IMR-90 (cell line): ENCODE measurements at regions of chr15 and their contacts with region 1.

Region 1: GRCh38 chr15:85296615-85297402 is 83.6 kb upstream of the AKAP13 start:
- DNase-seq: peak; percentile 81
- ATAC-seq: peak; percentile 100
- H3K4me3 ChIP-seq: peak overlapping the region; percentile 15; the same call in 1 of the 2 replicates
- H3K27ac ChIP-seq: no peak overlapping the region
- H3K4me1 ChIP-seq: no peaks in the 10 kb centered on the region
- H3K27me3 ChIP-seq: no peaks in the 10 kb centered on the region
- CTCF ChIP-seq: peak; percentile 82
- POLR2A ChIP-seq: no peak
- RAD21 ChIP-seq: peak; percentile 93

Region 2: GRCh38 chr15:84955089-84955848 is 341.5 kb before region 1 on chr15:
- CTCF ChIA-PET with region 1: no interaction called
- POLR2A ChIA-PET with region 1: no interaction called
- dilution Hi-C with region 1: no loop called
- in situ Hi-C with region 1: loop called (anchors 25 kb)
- intact Hi-C with region 1: no loop called
- DNase-seq: peak; percentile 78
- ATAC-seq: peak; percentile 98
- H3K4me3 ChIP-seq: no peak overlapping the region
- H3K27ac ChIP-seq: no peak overlapping the region
- H3K4me1 ChIP-seq: peaks cover 6% of the 10 kb centered on the region
- H3K27me3 ChIP-seq: no peaks in the 10 kb centered on the region
- CTCF ChIP-seq: peak; percentile 87
- POLR2A ChIP-seq: peak; percentile 50; the same call in 1 of the 2 replicates
- RAD21 ChIP-seq: peak; percentile 90

Region 3: DNA sequence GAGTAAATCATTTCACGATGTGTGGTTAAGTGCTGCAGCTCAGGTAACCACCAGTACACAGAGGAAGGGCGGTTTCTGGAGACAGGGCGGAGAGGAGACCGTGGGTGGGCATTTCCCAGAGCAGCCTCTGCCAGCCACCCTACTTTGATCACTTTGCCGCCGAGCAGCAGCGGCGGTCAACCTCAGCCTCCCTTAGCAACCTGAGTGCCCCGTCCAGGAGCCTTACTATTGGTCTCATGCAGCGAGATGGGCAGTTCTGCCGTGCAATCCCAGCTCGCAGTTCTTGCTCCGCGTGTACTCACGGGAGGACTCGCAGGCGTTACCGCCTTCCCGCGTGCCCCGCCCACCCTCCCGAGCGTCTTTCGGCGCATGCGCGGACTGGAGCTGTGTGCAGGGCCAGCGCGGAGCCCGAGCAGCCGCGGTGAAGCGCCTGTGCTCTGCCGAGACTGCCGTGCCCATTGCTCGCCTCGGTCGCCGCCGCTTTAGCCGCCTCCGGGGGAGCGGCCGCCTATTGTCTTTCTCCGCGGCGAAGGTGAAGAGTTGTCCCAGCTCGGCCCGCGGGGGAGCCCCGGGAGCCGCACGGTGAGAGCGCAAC is 83.5 kb after region 1 on chr15 and contains the start of gene AKAP13:
- CTCF ChIA-PET with region 1: interaction called, 3 read pairs
- POLR2A ChIA-PET with region 1: no interaction called
- dilution Hi-C with region 1: no loop called
- in situ Hi-C with region 1: no loop called
- intact Hi-C with region 1: loop called (anchors 1 kb)
- DNase-seq: peak; percentile 99
- ATAC-seq: peak; percentile 93
- H3K4me3 ChIP-seq: peak within 1 kb of the TSS; percentile 67
- H3K27ac ChIP-seq: peak within 1 kb of the TSS; percentile 78
- H3K4me1 ChIP-seq: peaks cover 3% of the 10 kb centered on the region
- H3K27me3 ChIP-seq: no peaks in the 10 kb centered on the region
- CTCF ChIP-seq: no peak
- POLR2A ChIP-seq: peak; percentile 73
- RAD21 ChIP-seq: peak; percentile 26
- total RNA-seq, gene AKAP13: 46.4 and 46.9 TPM in 2 replicates

Region 4: DNA sequence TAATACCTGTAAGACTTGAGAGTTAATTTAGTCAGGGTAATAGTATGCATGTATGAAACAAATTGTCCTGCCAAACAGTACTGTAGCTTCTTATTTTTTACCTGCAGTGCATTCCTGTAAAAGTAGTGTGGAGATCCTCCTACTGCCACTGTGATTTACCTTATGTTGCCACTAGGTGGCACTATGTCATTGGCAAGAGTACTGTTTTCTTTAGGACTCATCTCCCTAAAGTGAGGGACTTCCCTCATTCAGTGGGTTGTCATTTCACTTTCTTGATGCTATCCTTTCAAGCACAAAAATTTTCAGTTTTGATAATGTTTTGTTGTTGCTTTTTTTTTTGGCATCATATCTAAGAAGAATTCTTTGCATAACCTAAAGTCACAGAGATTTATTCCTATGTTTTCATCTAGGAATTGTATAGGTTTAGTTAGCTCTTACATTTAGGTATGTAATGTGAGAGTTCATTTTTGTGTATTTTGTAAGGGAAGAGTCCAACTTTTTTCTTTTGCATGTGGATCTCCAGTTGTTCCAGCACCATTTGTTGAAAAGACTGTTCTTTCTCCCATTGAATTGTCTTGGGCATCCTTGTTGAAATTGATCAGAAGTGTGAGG is 189.3 kb after region 1 on chr15:
- CTCF ChIA-PET with region 1: interaction called, 5 read pairs
- POLR2A ChIA-PET with region 1: no interaction called
- dilution Hi-C with region 1: no loop called
- in situ Hi-C with region 1: no loop called
- intact Hi-C with region 1: loop called (anchors 5 kb)
- DNase-seq: peak; percentile 81
- ATAC-seq: peak; percentile 61
- H3K4me3 ChIP-seq: no peak overlapping the region
- H3K27ac ChIP-seq: no peak overlapping the region
- H3K4me1 ChIP-seq: peaks cover 4% of the 10 kb centered on the region
- H3K27me3 ChIP-seq: no peaks in the 10 kb centered on the region
- CTCF ChIP-seq: peak; percentile 68
- POLR2A ChIP-seq: no peak
- RAD21 ChIP-seq: peak; percentile 81

Region 5: DNA sequence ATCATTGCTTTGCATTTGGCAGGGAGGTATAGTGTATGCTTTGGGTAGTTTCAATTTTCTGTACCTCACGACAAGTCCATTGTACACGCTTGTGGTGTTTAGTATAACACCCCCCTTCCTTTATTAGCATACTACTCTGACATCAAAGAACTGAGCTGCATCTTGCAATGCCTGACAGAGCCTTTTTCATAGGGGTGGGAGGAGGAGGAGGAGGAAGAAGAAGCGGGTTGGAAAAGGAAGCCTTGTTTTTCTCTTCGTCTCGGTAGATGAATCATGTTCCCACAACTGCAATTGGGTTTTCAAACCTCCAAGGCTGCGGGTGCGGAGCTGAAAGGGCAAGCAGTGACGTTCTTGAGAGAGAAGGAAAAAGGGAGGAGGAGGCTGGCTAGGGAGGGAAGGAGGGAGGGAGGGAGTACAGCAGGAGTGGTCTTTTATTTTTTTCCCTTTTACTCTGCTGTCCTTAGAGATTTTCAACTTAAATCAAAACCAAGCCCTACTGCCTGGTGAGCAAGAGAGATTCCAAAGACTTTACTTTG is 322.2 kb after region 1 on chr15:
- CTCF ChIA-PET with region 1: interaction called, 3 read pairs
- POLR2A ChIA-PET with region 1: no interaction called
- dilution Hi-C with region 1: no loop called
- in situ Hi-C with region 1: no loop called
- intact Hi-C with region 1: loop called (anchors 5 kb)
- DNase-seq: peak; percentile 98
- ATAC-seq: peak; percentile 86
- H3K4me3 ChIP-seq: peak overlapping the region; percentile 61
- H3K27ac ChIP-seq: peak overlapping the region; percentile 52
- H3K4me1 ChIP-seq: peaks cover 21% of the 10 kb centered on the region
- H3K27me3 ChIP-seq: no peaks in the 10 kb centered on the region
- CTCF ChIP-seq: no peak
- POLR2A ChIP-seq: peak; percentile 51; the same call in 1 of the 2 replicates
- RAD21 ChIP-seq: no peak; the same call in 1 of the 2 replicates

Region 6: GRCh38 chr15:85707519-85708338 is 410.9 kb after region 1 on chr15:
- CTCF ChIA-PET with region 1: no interaction called
- POLR2A ChIA-PET with region 1: no interaction called
- dilution Hi-C with region 1: no loop called
- in situ Hi-C with region 1: no loop called
- intact Hi-C with region 1: loop called (anchors 5 kb)
- DNase-seq: peak; percentile 51
- ATAC-seq: peak; percentile 43
- H3K4me3 ChIP-seq: peak overlapping the region; percentile 9; the same call in 1 of the 2 replicates
- H3K27ac ChIP-seq: peak overlapping the region; percentile 27; the same call in 1 of the 2 replicates
- H3K4me1 ChIP-seq: peaks cover 14% of the 10 kb centered on the region
- H3K27me3 ChIP-seq: no peaks in the 10 kb centered on the region
- CTCF ChIP-seq: no peak
- POLR2A ChIP-seq: no peak
- RAD21 ChIP-seq: no peak

Region 7: GRCh38 chr15:85831415-85832113 is 534.8 kb after region 1 on chr15:
- CTCF ChIA-PET with region 1: no interaction called
- POLR2A ChIA-PET with region 1: no interaction called
- dilution Hi-C with region 1: no loop called
- in situ Hi-C with region 1: loop called (anchors 5 kb)
- intact Hi-C with region 1: loop called (anchors 2 kb)
- DNase-seq: peak; percentile 48
- ATAC-seq: peak; percentile 99
- H3K4me3 ChIP-seq: no peak overlapping the region
- H3K27ac ChIP-seq: no peak overlapping the region
- H3K4me1 ChIP-seq: no peaks in the 10 kb centered on the region
- H3K27me3 ChIP-seq: peaks cover 10% of the 10 kb centered on the region
- CTCF ChIP-seq: peak; percentile 70
- POLR2A ChIP-seq: no peak
- RAD21 ChIP-seq: peak; percentile 73